HEK293T (cell line): ENCODE measurements at regions of chr5 and their contacts with region 1.

Region 1: GRCh38 chr5:138213161-138214029 is at the start of gene CDC23:
- DNase-seq: peak; percentile 95

Region 2: DNA sequence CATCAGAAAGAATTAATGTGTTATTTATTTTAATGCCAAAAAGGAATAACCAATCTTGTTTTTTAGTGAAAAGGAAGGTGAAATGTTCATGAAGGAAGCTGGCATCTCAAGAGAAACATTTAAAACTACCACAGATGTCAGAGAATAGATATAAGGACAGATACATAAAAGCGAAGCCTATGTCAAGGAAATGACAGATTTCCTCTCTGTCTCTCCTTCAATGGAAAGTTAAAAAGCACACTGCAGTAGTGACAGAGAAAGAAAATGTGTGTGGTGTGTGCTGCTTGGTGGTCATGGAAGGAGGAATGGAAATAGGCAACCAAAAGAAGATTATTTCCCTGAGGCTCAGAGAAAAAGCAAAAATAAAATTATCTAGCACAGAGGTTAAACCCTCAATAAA is 120.4 kb before region 1 on chr5:
- CTCF ChIA-PET with region 1: no interaction called
- POLR2A ChIA-PET with region 1: no interaction called
- DNase-seq: no peak

Region 3: GRCh38 chr5:138178516-138179276 is 34.7 kb before region 1 on chr5 and contains the starts of genes BRD8 and KIF20A:
- CTCF ChIA-PET with region 1: interaction called, 4 read pairs
- POLR2A ChIA-PET with region 1: interaction called, 19 read pairs
- DNase-seq: peak; percentile 89

Region 4: DNA sequence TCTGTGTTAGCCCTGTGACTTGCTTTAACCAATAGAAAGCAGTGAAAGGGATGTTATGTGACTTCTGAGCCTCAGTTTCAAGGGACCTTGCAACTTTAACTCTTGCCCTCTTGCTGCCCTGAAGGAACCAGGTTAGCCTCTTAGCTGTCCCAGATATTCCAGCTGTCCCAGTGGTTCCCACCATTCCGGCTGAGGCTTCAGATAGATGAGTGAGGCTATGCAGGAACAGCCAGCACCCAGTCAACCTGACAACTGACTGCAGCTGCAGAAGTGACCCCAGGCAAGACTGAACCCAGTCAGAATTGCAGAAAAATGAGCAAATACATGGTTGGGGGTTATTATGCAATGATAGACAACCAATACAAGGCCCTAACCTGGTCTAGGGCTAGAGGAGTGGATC is 10.1 kb after region 1 on chr5:
- CTCF ChIA-PET with region 1: interaction called, 11 read pairs
- POLR2A ChIA-PET with region 1: interaction called, 31 read pairs
- DNase-seq: no peak

Region 5: DNA sequence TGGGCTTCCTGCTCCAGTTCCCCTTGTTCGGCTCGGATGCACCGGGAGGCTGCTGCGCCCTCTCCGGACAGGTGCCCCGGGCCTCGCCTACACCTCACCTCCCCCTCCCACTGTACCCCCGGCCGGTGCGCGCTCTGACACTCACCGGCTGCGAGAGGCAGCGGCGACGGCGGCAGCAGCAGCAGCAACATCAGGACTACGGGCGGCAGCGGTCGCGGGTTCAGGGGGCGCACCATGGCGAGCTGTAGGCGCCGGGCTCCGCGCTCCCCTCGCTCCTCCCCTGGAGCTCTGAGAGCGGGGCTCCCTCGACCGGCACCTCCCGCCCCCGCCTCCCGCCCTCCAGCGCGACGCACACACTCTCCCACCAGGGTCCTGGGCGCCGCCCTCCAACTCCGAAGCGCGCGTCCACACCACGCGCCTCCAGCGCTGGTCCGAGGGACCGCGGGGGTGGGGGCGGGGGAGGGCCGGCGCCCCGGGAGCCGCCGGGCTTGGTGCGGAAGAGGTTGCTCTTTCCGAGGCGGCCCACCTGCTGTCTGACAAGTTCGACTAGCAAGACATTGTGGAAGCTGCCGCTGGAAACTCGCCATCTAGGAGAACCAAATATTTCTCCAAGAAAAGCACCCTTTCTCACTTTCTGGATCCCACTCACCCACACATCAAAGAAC is 60.9 kb after region 1 on chr5 and contains the start of gene GFRA3:
- CTCF ChIA-PET with region 1: no interaction called
- POLR2A ChIA-PET with region 1: interaction called, 18 read pairs
- DNase-seq: no peak

Region 6: GRCh38 chr5:138352071-138352721 is 138.8 kb after region 1 on chr5 and contains the start of gene KDM3B:
- CTCF ChIA-PET with region 1: interaction called, 5 read pairs
- POLR2A ChIA-PET with region 1: interaction called, 17 read pairs
- DNase-seq: peak; percentile 95